ENCODE measurements at regions of chr9 and their contacts with region 1.

Region 1: DNA sequence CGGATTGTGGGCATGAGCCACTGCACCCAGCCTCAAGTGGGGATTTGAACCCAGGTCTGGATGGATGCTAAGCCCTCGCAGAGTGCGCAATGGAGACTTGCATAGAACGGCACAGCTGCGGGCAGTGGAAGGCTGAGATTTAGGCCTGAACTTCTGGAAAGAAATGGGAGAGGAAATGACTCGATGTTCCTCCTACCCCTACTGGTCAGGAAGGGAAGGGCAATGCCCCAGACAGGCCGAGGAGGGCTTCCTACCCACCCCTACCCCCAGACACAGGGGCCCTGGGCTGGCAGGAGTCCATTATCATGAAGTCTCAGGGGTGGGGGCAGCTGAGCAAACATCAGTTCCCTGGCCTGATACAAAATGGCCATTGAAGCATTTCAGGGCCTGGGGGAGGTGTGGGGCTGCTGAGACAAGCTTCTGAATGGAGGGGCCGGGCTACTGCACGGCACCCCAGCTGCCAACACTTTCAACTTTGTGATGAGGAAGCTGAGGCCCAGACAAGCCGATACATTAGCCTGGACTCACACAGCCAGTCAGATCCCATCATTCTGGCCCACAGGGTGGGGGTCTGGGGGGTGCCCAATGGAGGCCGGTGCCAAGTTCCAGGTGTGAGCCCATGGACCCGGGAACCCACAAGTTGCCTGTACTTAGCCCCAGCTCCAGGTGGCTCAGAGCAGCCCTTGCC is 13.5 kb upstream of the WDR38 start:
- DNase-seq: peak in 1 of 2 experiments; percentile 84
- H3K4me3 ChIP-seq: no peak overlapping the region
- H3K27ac ChIP-seq: 0 out of 2 replicates have a peak overlapping the region, but pooled peaks have one; percentile 5
- H3K4me1 ChIP-seq: peaks cover 0 to 14% (median 3%) of the 10 kb centered on the region in 4 experiments; a peak in 4 of 7 replicates
- H3K27me3 ChIP-seq: no peaks in the 10 kb centered on the region
- CTCF ChIP-seq: peak; percentile 71 to 89 (median 78)
- EP300 ChIP-seq: no peak
- POLR2A ChIP-seq: no peak
- RAD21 ChIP-seq: peak; percentile 50 to 61

Region 2: GRCh38 chr9:124776954-124777665 is 62.6 kb before region 1 on chr9 and contains the start of gene OLFML2A:
- CTCF ChIA-PET with region 1: interaction called, 1,300 read pairs
- POLR2A ChIA-PET with region 1: interaction called, 15 read pairs
- DNase-seq: peak in 1 of 2 experiments; percentile 83
- H3K4me3 ChIP-seq: peak within 1 kb of the TSS; percentile 29 to 73 (median 52)
- H3K27ac ChIP-seq: no peak within 1 kb of the TSS
- H3K4me1 ChIP-seq: peaks cover 12 to 22% (median 17%) of the 10 kb centered on the region in 4 experiments
- H3K27me3 ChIP-seq: peaks cover 0 to 10% (median 6%) of the 10 kb centered on the region in 4 experiments; a peak in 6 of 7 replicates
- CTCF ChIP-seq: peak; percentile 61 to 73 (median 61)
- EP300 ChIP-seq: no peak
- POLR2A ChIP-seq: peak in 1 of 2 experiments; percentile 28; a peak in 1 of 3 replicates
- RAD21 ChIP-seq: peak; percentile 16 to 47; a peak in 2 of 4 replicates
- total RNA-seq, gene OLFML2A: 11.4 and 11.5 TPM in 2 replicates

Measured in H1 (cell line).